ENCODE measurements at regions of chr19 and their contacts with region 1.

Region 1: GRCh38 chr19:13794757-13795589 is at the start of gene ZSWIM4:
- DNase-seq: peak; percentile 100
- H3K4me3 ChIP-seq: peak within 1 kb of the TSS; percentile 72 to 97 (median 87)
- H3K27ac ChIP-seq: peak within 1 kb of the TSS; percentile 95
- H3K4me1 ChIP-seq: peaks cover 20% of the 10 kb centered on the region
- H3K27me3 ChIP-seq: no peaks in the 10 kb centered on the region
- CTCF ChIP-seq: no peak
- POLR2A ChIP-seq: peak; percentile 5
- total RNA-seq, gene ZSWIM4: 23.1 and 26.6 TPM in 2 replicates

Region 2: GRCh38 chr19:13644645-13645044 is 150.3 kb before region 1 on chr19:
- CTCF ChIA-PET with region 1: no interaction called
- POLR2A ChIA-PET with region 1: no interaction called
- dilution Hi-C with region 1: no loop called
- intact Hi-C with region 1: no loop called
- DNase-seq: no peak
- H3K4me3 ChIP-seq: no peak overlapping the region
- H3K27ac ChIP-seq: no peak overlapping the region
- H3K4me1 ChIP-seq: no peaks in the 10 kb centered on the region
- H3K27me3 ChIP-seq: no peaks in the 10 kb centered on the region
- CTCF ChIP-seq: no peak
- POLR2A ChIP-seq: no peak

Region 3: DNA sequence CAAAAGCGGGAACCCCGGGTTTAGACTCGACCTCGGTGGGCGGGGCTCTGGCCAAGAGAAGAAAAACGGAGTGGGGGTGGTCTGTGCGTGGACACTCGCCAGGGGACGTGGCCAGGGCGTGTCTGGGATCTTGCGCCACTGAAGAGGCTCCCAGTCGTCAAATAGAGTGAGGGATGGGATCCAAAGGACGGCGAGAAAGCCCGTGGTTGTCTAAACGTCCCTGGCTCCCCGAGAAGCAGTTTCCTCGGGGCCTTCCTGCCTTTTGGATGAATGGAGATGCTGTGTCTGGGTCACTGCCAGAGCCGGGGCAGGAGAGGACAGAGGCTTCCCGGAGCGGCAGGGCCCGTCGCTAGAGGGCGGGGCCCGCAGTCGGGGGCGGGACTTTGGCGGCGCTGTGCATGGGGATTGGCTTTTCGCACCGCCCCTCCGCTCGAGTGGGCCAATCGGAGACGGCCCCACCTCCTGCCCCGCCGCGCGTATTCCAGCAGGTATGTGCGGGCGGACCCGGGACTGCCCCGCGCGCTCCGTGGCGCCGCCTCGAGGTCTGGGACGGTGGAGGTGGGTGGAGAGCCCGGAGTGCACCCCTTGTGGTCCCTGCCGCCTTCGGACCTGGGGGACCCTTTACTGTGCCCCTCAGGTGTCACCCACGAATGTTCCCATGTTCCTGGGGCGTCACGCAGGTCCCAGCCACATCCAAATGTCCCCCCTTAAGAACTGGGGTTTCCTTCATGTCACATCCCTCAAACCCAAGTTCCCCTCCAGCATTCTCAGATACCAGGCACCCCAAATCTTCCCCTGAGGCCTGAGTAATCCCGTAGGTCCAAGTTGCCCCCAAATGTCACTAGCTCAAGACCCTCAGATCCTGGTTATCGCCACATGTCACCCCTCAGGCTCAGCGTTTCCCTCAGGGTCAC is 38.6 kb after region 1 on chr19:
- CTCF ChIA-PET with region 1: interaction called, 8 read pairs
- POLR2A ChIA-PET with region 1: interaction called, 5 read pairs
- dilution Hi-C with region 1: no loop called
- intact Hi-C with region 1: loop called (anchors 2 kb)
- DNase-seq: peak; percentile 91
- H3K4me3 ChIP-seq: no peak overlapping the region
- H3K27ac ChIP-seq: peak overlapping the region; percentile 11
- H3K4me1 ChIP-seq: peaks cover 27% of the 10 kb centered on the region
- H3K27me3 ChIP-seq: no peaks in the 10 kb centered on the region
- CTCF ChIP-seq: peak; percentile 32 to 63
- POLR2A ChIP-seq: peak; percentile 93

Measured in endothelial cell of umbilical vein (primary cell).